Activated T-helper 2 cell treated with anti-CD3 and anti-CD28 coated beads, Interferon-gamma antibody, Interleukin-2, Interleukin-4, amounts not matched to agents 10 μg/mL and 5 μg/mL and 100 μg/mL, durations not matched to agents 14 hours and 24 hours and 36 hours (primary cell): ENCODE measurements at regions of chr10 and their contacts with region 1.

Region 1: DNA sequence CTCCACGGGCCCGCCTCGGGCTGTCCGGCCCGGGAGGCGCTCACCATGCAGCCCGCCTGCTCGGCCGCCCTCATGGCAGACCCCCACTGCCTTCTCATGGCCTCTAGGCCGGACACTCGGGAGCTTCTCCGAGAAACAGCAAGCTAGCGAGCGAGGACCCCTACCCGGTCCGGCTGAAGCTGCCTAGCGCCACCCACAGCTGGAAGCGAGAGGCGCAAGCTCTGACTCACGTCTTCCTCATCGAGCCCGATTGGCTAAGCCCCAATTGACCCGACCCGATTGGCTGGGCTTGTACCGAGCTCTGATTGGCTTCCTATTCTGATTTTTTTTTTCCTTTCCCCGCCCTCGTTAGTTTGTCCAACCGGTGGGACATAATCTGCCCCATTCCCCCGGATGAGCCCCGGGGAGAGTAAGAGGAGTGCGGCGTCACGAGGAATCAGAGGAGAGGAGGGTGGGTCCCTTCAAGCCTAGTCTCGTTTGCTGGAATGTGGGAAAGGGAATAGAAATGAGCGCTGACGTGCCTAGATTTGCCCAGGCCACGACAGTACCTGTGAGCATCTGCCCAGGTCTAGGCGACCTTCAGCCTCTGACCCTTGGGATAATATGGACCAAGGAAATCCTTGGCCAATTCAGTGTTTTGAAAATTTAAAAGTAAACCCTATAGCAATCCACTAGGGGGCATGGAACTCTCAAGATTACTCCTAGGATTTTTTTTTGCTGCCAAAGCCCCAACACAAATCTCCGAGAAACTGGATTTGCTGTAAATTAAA is at the start of gene TYSND1:
- DNase-seq: peak; percentile 92
- H3K4me3 Mint-ChIP-seq: peak within 1 kb of the TSS; percentile 92
- H3K27ac Mint-ChIP-seq: peak within 1 kb of the TSS; percentile 97
- H3K4me1 Mint-ChIP-seq: peaks cover 16% of the 10 kb centered on the region
- H3K27me3 Mint-ChIP-seq: no peaks in the 10 kb centered on the region
- total RNA-seq, gene TYSND1: 12.5 and 13.6 TPM in 2 replicates

Region 2: GRCh38 chr10:70007116-70007820 is 139.4 kb before region 1 on chr10:
- intact Hi-C with region 1: no loop called
- DNase-seq: no peak
- H3K4me3 Mint-ChIP-seq: no peak overlapping the region
- H3K27ac Mint-ChIP-seq: no peak overlapping the region
- H3K4me1 Mint-ChIP-seq: no peaks in the 10 kb centered on the region
- H3K27me3 Mint-ChIP-seq: peaks cover 33% of the 10 kb centered on the region

Region 3: DNA sequence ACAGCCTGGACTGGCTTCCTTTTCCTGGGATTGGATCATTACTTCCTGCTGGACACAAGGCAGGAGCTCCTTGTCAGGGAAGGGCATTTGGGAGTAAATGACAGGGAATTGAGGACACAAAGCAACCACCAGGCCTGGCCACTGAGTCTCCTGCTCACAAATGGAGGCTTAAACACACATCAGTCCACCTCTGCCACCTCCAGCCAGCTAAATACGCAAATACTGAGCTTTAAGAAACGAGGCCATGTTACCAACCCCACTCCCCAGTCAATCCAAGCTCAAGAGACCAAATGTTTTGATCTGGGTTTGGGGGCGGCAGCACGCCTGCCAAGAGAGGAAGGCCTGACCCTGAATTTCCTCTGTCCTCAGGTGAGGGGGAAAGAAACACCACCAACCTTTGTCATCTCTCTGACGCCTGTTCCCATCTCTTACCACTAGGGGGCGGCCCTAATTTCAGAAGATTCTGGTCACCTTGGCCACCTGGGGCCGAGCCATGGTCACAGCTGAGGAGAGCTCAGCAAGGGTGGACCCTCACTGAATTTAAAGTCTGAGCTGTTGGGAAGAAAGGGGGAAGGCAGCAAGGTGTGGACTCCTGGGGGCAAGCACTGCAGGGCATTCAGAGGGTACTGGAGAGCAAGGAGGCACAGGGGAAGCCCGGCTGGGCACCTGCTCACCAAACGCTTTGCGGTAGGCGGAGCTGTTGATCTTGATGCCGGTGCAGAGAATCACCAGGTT is 30.6 kb before region 1 on chr10:
- intact Hi-C with region 1: loop called (anchors 1 kb)
- DNase-seq: peak; percentile 42
- H3K4me3 Mint-ChIP-seq: no peak overlapping the region
- H3K27ac Mint-ChIP-seq: no peak overlapping the region
- H3K4me1 Mint-ChIP-seq: peaks cover 2% of the 10 kb centered on the region
- H3K27me3 Mint-ChIP-seq: no peaks in the 10 kb centered on the region

Region 4: GRCh38 chr10:70162892-70163201 is 16.2 kb after region 1 on chr10:
- intact Hi-C with region 1: loop called (anchors 1 kb)
- DNase-seq: peak; percentile 68
- H3K4me3 Mint-ChIP-seq: peak overlapping the region; percentile 53
- H3K27ac Mint-ChIP-seq: peak overlapping the region; percentile 88
- H3K4me1 Mint-ChIP-seq: peaks cover 60% of the 10 kb centered on the region
- H3K27me3 Mint-ChIP-seq: no peaks in the 10 kb centered on the region

Region 5: DNA sequence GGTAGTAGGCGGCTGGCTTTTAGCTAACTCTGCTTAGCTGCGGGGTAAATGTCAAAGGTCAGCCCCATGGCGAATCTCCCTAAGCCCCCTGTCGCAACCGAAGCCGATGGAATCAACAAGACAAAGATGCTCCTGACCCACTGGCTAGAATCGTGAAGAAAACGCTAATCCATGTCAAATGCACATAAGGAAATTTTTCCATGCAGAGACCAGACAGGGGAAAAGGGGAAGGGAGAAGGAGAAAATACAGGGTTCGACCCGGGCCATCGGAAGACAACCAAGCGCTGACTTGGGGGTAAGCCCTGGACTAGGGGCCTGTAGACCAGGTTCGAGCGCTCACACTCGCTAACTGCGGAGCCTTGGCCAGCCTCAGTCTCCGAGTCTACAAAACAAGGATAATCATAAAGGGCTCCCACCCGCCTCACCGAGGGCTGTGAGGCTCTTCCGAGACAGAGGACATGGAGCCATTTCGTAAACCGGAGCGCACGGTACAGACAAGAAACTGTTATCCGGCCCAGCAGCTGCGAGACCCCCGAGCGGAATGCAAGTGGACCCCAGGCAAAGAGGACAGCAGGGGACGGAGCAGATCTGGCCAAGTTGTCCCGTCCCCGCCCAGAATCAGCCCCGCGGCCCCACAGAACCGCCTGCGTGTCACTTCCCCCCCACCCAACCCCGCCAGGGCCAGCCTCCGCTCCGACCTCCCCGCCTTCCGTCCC is 23.1 kb after region 1 on chr10:
- intact Hi-C with region 1: loop called (anchors 1 kb)
- DNase-seq: no peak
- H3K4me3 Mint-ChIP-seq: peak overlapping the region; percentile 89
- H3K27ac Mint-ChIP-seq: peak overlapping the region; percentile 94
- H3K4me1 Mint-ChIP-seq: peaks cover 48% of the 10 kb centered on the region
- H3K27me3 Mint-ChIP-seq: no peaks in the 10 kb centered on the region

Region 6: DNA sequence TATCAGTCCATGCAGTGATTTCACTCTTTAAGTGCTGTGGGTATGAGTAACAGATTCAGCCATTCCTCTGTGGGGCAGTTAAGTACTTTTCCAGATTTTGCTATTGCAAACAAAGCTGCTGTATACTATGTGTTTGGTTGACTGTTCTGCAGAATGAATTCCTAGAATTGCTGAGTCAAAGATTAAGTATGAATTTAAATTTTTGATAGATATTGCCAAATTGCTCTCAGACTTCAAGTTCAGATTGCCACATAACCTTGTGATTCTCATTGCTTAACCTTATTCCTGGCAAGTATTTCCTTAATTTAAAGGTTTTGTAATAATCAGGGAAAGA is 45.3 kb after region 1 on chr10:
- intact Hi-C with region 1: loop called (anchors 10 kb)
- DNase-seq: no peak
- H3K4me3 Mint-ChIP-seq: no peak overlapping the region
- H3K27ac Mint-ChIP-seq: peak overlapping the region; percentile 7
- H3K4me1 Mint-ChIP-seq: peaks cover 7% of the 10 kb centered on the region
- H3K27me3 Mint-ChIP-seq: no peaks in the 10 kb centered on the region